GM13976 (cell line): ENCODE measurements at regions of chr17 and their contacts with region 1.

Region 1: DNA sequence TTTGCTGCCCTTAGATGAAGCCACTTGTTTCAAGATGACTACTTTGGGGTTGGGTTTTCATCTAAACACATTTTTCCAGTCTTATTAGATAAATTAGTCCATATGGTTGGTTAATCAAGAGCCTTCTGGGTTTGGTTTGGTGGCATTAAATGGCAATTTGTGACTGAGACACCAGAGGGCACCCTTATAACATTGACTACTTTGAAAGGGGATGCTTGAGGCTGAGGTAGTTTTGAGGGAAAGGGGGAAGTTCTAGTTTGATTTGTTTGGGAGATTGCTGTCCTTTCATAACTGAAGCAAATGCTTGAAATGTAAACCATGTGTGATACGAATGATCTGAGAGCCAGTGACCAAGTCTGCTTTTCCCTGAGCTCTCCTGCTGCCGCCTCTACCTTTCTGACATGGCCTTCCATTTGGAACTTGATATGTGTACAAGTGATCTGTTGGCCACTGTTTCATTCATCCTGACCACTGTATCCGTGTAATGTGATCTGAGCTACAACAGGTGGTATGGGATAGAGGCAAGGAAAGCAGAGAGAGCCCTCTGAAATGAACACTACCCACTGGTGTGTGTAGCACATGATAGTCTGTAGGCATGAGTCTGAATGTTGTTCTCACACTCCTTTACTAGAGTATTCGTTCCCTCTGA is 5.8 kb upstream of the RARA start:
- DNase-seq: peak; percentile 69
- CTCF ChIP-seq: peak; percentile 63

Region 2: DNA sequence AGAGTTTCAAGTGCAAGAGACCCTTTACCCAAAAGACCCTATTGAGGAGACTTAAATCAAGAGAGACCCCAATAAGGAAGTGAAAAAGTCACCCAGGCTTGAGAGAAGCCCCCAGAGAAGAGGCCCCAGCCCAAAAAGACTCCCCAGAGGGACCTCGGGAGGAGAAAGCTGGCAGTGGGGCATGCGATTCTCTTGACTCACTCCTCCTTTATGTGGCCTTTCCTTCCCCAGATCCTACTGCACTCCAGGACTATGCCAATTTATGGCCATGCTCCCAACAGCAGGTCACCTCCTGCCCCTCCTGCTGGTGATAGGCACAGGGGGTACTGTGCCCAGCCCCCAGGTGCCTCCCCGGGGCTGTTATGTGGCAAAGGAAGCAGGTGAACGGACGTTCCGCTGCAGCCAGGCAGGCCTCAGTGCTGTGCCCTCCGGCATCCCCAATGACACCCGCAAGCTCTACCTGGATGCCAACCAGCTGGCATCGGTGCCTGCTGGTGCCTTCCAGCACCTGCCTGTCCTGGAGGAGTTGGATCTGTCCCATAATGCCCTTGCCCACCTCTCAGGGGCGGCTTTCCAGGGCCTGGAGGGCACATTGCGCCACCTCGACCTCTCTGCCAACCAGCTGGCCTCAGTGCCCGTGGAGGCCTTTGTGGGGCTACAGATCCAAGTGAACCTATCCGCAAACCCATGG is 359.3 kb before region 1 on chr17:
- in situ Hi-C with region 1: no loop called
- DNase-seq: no peak
- CTCF ChIP-seq: no peak

Region 3: DNA sequence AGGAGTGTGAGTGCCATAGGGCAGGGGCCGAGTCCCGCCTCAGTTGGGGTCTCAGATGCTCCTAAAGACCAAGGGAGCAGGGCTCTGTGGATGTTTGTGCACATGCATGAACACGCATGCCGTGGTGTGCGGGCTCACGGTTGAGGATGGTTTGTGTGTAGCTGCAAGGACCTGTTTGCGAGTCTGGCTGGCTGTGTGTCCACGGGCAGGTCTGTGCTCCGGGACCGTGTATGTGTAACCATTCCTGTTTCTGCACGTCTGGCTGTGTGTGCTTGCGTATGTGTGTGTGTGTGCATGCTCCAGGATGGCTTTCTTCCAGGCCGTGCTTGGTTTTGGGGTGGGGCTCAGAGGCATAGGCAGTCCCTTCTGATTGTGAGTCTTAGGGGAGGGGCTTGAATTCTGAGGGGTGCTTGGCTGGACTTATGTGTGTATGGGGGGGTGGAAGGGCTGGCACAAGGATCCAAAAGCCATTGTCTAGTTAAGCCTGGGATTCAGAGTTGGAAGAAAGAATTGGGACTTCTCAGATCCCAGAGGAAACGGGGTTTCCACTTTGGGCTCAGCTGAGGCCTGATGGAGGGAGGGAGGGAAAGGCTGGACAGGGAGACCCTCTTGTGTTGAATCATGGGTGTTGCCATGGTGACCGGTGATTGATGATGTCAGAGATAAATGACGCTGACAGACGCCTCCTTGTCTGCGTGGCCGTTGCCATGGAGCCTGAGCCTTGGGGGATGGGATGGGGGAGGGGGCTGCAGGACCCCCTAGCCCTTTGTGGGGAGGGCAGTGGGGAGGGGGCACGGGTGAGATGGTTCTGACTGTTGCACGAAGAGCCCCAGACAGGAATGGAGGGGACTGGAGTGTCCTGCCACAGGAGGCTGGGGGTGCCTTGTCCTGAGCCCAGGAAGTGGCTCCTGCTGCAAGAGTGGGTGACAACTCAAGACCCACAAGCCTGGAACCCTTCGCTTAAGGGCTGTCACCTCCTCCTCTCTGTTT is 47.1 kb after region 1 on chr17:
- in situ Hi-C with region 1: loop called (anchors 5 kb)
- DNase-seq: no peak
- CTCF ChIP-seq: no peak

Region 4: GRCh38 chr17:40986924-40987323 is 683.8 kb after region 1 on chr17:
- in situ Hi-C with region 1: no loop called
- DNase-seq: no peak
- CTCF ChIP-seq: no peak

Region 5: DNA sequence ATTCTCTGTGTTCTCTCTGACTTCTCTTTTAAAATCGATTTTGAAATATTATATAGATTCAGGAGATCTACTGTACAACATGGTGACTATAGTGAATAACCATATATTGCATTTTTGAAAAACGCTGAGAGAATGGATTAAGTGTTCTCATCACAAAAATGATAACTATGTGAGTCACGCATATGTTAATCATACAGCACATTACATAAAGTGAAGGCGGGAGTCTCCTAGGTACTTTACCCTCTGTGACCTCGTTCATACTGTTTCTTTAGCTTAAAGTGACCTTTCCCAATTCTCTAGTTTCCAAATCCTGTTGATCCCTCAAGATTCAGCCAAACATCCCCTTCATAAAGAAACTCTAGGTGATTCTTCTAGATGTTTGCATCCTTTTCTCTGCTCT is 699.7 kb after region 1 on chr17:
- in situ Hi-C with region 1: no loop called
- DNase-seq: no peak
- CTCF ChIP-seq: no peak